T-cell (primary cell): ENCODE measurements at regions of chr2 and their contacts with region 1.

Region 1: DNA sequence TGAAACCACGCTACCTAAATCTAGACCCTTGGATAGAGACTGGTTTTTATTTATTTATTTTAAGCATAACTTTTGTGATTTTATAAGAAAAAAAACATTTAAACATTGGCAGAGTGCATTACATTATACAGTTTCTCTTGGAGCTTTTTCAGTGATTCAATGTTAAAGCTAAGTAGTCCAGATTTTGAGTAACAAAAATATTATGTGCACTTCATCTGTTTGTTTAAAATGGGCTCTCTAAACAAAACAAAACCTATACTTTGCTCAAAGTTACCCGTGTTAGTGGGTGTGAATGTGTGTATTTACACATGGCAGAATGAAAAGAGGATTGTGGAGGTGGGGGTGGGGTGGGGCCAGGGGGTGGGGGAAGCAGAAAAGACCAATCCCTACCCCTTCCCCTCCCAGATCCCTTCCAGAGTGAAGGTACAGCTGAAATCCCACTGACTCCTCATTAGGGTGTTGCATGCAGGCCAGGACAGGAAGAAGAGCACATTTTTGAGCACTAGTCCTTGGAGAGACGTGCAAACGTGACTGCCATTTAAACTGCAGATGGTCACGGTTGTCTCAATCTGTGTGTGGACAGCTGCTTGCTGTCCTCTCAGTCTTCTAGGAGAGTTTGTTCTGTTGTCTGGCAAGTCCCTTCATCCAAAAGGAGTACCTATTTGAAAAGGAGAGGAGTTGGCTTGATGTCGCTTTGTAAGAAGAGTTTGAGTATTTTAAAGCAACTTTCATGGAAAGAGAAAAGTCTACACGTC is 303.0 kb downstream of the ICOS start:
- DNase-seq: no peak
- ATAC-seq: no peak
- H3K4me3 ChIP-seq: no peak overlapping the region
- H3K4me3 Mint-ChIP-seq: no peak overlapping the region
- H3K27ac ChIP-seq: no peak overlapping the region
- H3K27ac Mint-ChIP-seq: no peak overlapping the region
- H3K4me1 ChIP-seq: peaks cover 5 to 7% of the 10 kb centered on the region in 2 experiments
- H3K4me1 Mint-ChIP-seq: peaks cover 11 to 27% (median 14%) of the 10 kb centered on the region in 3 donors
- H3K27me3 ChIP-seq: peaks cover 0 to 5% of the 10 kb centered on the region in 2 experiments
- H3K27me3 Mint-ChIP-seq: peaks cover 7 to 11% of the 10 kb centered on the region in 2 donors

Region 2: GRCh38 chr2:203808046-203808750 is 431.4 kb before region 1 on chr2:
- CTCF ChIA-PET with region 1: no interaction called
- POLR2A ChIA-PET with region 1: interaction called in 1 of 2 experiments, 21 read pairs
- DNase-seq: no peak
- ATAC-seq: no peak
- H3K4me3 ChIP-seq: no peak overlapping the region
- H3K4me3 Mint-ChIP-seq: no peak overlapping the region
- H3K27ac ChIP-seq: no peak overlapping the region
- H3K27ac Mint-ChIP-seq: peak overlapping the region in 1 of 2 donors; percentile 71
- H3K4me1 ChIP-seq: peaks cover 35 to 38% of the 10 kb centered on the region in 2 experiments
- H3K4me1 Mint-ChIP-seq: peaks cover 64 to 82% (median 79%) of the 10 kb centered on the region in 3 donors
- H3K27me3 ChIP-seq: no peaks in the 10 kb centered on the region
- H3K27me3 Mint-ChIP-seq: no peaks in the 10 kb centered on the region